Endothelial cell of umbilical vein (primary cell): ENCODE measurements at regions of chr6 and their contacts with region 1.

Region 1: DNA sequence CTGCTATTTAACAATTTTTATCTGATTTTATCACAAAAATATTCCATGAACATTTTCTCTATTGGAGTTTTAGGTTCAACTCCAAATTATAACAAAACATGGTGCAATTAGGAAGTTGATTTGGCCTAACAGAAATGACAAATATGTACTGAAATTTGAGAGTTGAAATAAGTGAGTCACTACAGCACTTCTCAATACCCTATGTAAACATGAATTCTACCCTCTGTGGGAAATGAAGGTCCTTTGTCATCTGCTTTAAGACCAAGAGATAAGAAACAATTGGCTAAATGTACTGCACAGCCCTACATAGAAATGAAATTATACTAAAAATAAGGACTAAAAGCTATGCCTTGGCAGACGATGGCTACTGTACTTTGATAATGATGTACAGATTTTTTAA is 86.2 kb upstream of the BEND6 start:
- DNase-seq: peak; percentile 91
- H3K4me3 ChIP-seq: peak overlapping the region in 1 of 3 experiments; percentile 5
- H3K27ac ChIP-seq: peak overlapping the region; percentile 70
- H3K4me1 ChIP-seq: peaks cover 52% of the 10 kb centered on the region
- H3K27me3 ChIP-seq: no peaks in the 10 kb centered on the region
- CTCF ChIP-seq: no peak
- POLR2A ChIP-seq: no peak

Region 2: GRCh38 chr6:56311061-56311460 is 557.6 kb before region 1 on chr6:
- CTCF ChIA-PET with region 1: no interaction called
- POLR2A ChIA-PET with region 1: no interaction called
- dilution Hi-C with region 1: no loop called
- intact Hi-C with region 1: no loop called
- DNase-seq: peak; percentile 31
- H3K4me3 ChIP-seq: no peak overlapping the region
- H3K27ac ChIP-seq: no peak overlapping the region
- H3K4me1 ChIP-seq: no peaks in the 10 kb centered on the region
- H3K27me3 ChIP-seq: no peaks in the 10 kb centered on the region
- CTCF ChIP-seq: no peak
- POLR2A ChIP-seq: no peak

Region 3: DNA sequence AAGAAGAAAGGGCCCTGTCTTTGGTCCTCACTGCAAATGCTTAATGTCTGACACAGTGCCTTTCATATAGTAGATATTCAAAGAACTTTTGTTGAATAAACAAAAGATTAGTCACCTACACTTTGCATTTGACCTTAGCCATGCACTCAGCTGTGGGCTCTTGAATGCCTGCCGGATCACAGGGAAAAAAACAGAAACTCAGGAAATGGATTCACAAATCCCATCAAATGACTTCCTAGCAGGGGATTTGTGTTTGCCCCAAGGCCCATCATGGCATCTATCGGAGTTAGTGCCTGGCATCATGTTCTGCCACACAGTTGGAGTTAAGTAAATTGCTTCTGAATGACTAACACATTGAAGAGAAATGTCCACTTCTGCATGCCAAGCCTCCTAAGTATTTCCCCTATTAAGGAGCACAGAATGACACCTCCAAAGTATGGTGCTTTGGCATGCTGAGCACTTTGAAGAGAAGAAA is 153.7 kb before region 1 on chr6:
- CTCF ChIA-PET with region 1: interaction called, 3 read pairs
- POLR2A ChIA-PET with region 1: no interaction called
- dilution Hi-C with region 1: no loop called
- intact Hi-C with region 1: loop called (anchors 2 kb)
- DNase-seq: peak; percentile 95
- H3K4me3 ChIP-seq: no peak overlapping the region
- H3K27ac ChIP-seq: peak overlapping the region; percentile 86
- H3K4me1 ChIP-seq: peaks cover 50% of the 10 kb centered on the region
- H3K27me3 ChIP-seq: no peaks in the 10 kb centered on the region
- CTCF ChIP-seq: no peak
- POLR2A ChIP-seq: peak; percentile 34

Region 4: GRCh38 chr6:56890683-56891429 is 22.2 kb after region 1 on chr6:
- CTCF ChIA-PET with region 1: interaction called, 6 read pairs
- POLR2A ChIA-PET with region 1: interaction called, 7 read pairs
- dilution Hi-C with region 1: no loop called
- intact Hi-C with region 1: loop called (anchors 2 kb)
- DNase-seq: peak; percentile 71
- H3K4me3 ChIP-seq: no peak overlapping the region
- H3K27ac ChIP-seq: peak overlapping the region; percentile 65
- H3K4me1 ChIP-seq: peaks cover 30% of the 10 kb centered on the region
- H3K27me3 ChIP-seq: no peaks in the 10 kb centered on the region
- CTCF ChIP-seq: no peak
- POLR2A ChIP-seq: peak; percentile 26